ENCODE measurements at regions of chr14 and their contacts with region 1.

Region 1: GRCh38 chr14:35438910-35439713 is 34.6 kb upstream of the NFKBIA start:
- DNase-seq: no peak
- ATAC-seq: no peak
- H3K4me3 ChIP-seq: no peak overlapping the region
- H3K4me3 Mint-ChIP-seq: no peak overlapping the region
- H3K27ac ChIP-seq: no peak overlapping the region
- H3K27ac Mint-ChIP-seq: no peak overlapping the region
- H3K4me1 ChIP-seq: no peaks in the 10 kb centered on the region
- H3K4me1 Mint-ChIP-seq: peaks cover 0 to 4% (median 0%) of the 10 kb centered on the region in 7 donors
- H3K27me3 ChIP-seq: no peaks in the 10 kb centered on the region
- H3K27me3 Mint-ChIP-seq: peaks cover 0 to 3% (median 0%) of the 10 kb centered on the region in 5 donors

Region 2: GRCh38 chr14:35814371-35815005 is 375.4 kb after region 1 on chr14:
- CTCF ChIA-PET with region 1: no interaction called
- POLR2A ChIA-PET with region 1: no interaction called
- intact Hi-C with region 1: loop called in 1 of 2 experiments (anchors 2 kb)
- DNase-seq: peak; percentile 54 to 83 (median 71)
- ATAC-seq: peak; percentile 96
- H3K4me3 ChIP-seq: no peak overlapping the region
- H3K4me3 Mint-ChIP-seq: no peak overlapping the region
- H3K27ac ChIP-seq: no peak overlapping the region
- H3K27ac Mint-ChIP-seq: no peak overlapping the region
- H3K4me1 ChIP-seq: no peaks in the 10 kb centered on the region
- H3K4me1 Mint-ChIP-seq: peaks cover 0 to 7% (median 1%) of the 10 kb centered on the region in 7 donors
- H3K27me3 ChIP-seq: no peaks in the 10 kb centered on the region
- H3K27me3 Mint-ChIP-seq: peaks cover 0 to 14% (median 0%) of the 10 kb centered on the region in 5 donors

Measured in naive thymus-derived CD4-positive, alpha-beta T cell (primary cell).